CD4-positive, alpha-beta T cell (primary cell): ENCODE measurements at regions of chr22 and their contacts with region 1.

Region 1: GRCh38 chr22:35430897-35431322 is 31.0 kb downstream of the MCM5 start:
- DNase-seq: peak; percentile 47 to 79 (median 64)
- ATAC-seq: peak; percentile 85
- H3K4me3 ChIP-seq: no peak overlapping the region
- H3K4me3 Mint-ChIP-seq: no peak overlapping the region
- H3K27ac ChIP-seq: no peak overlapping the region
- H3K27ac Mint-ChIP-seq: no peak overlapping the region
- H3K4me1 ChIP-seq: no peaks in the 10 kb centered on the region
- H3K4me1 Mint-ChIP-seq: no peaks in the 10 kb centered on the region
- H3K27me3 ChIP-seq: no peaks in the 10 kb centered on the region
- H3K27me3 Mint-ChIP-seq: no peaks in the 10 kb centered on the region
- CTCF ChIP-seq: peak; percentile 71

Region 2: GRCh38 chr22:35582861-35583670 is 152.2 kb after region 1 on chr22:
- CTCF ChIA-PET with region 1: interaction called, 11 read pairs
- POLR2A ChIA-PET with region 1: no interaction called
- intact Hi-C with region 1: loop called (anchors 1 kb)
- DNase-seq: peak; percentile 20 to 80 (median 41)
- ATAC-seq: peak; percentile 64
- H3K4me3 ChIP-seq: no peak overlapping the region
- H3K4me3 Mint-ChIP-seq: no peak overlapping the region
- H3K27ac ChIP-seq: no peak overlapping the region
- H3K27ac Mint-ChIP-seq: no peak overlapping the region
- H3K4me1 ChIP-seq: no peaks in the 10 kb centered on the region
- H3K4me1 Mint-ChIP-seq: no peaks in the 10 kb centered on the region
- H3K27me3 ChIP-seq: no peaks in the 10 kb centered on the region
- H3K27me3 Mint-ChIP-seq: no peaks in the 10 kb centered on the region
- CTCF ChIP-seq: peak; percentile 91

Region 3: GRCh38 chr22:35622191-35622913 is 191.4 kb after region 1 on chr22:
- CTCF ChIA-PET with region 1: no interaction called
- POLR2A ChIA-PET with region 1: no interaction called
- intact Hi-C with region 1: loop called in 1 of 2 experiments (anchors 2 kb)
- DNase-seq: no peak
- ATAC-seq: no peak
- H3K4me3 ChIP-seq: no peak overlapping the region
- H3K4me3 Mint-ChIP-seq: no peak overlapping the region
- H3K27ac ChIP-seq: no peak overlapping the region
- H3K27ac Mint-ChIP-seq: no peak overlapping the region
- H3K4me1 ChIP-seq: peaks cover 9% of the 10 kb centered on the region
- H3K4me1 Mint-ChIP-seq: peaks cover 10% of the 10 kb centered on the region
- H3K27me3 ChIP-seq: no peaks in the 10 kb centered on the region
- H3K27me3 Mint-ChIP-seq: peaks cover 9% of the 10 kb centered on the region
- CTCF ChIP-seq: no peak

Region 4: GRCh38 chr22:35921777-35922176 is 490.9 kb after region 1 on chr22:
- CTCF ChIA-PET with region 1: no interaction called
- POLR2A ChIA-PET with region 1: no interaction called
- intact Hi-C with region 1: loop called (anchors 5 kb)
- DNase-seq: peak in 7 of 14 experiments; percentile 3 to 63 (median 39)
- ATAC-seq: no peak
- H3K4me3 ChIP-seq: no peak overlapping the region
- H3K4me3 Mint-ChIP-seq: no peak overlapping the region
- H3K27ac ChIP-seq: no peak overlapping the region
- H3K27ac Mint-ChIP-seq: no peak overlapping the region
- H3K4me1 ChIP-seq: no peaks in the 10 kb centered on the region
- H3K4me1 Mint-ChIP-seq: no peaks in the 10 kb centered on the region
- H3K27me3 ChIP-seq: no peaks in the 10 kb centered on the region
- H3K27me3 Mint-ChIP-seq: no peaks in the 10 kb centered on the region
- CTCF ChIP-seq: peak; percentile 53

Region 5: GRCh38 chr22:36123673-36124630 is 693.0 kb after region 1 on chr22:
- CTCF ChIA-PET with region 1: interaction called, 9 read pairs
- POLR2A ChIA-PET with region 1: no interaction called
- intact Hi-C with region 1: loop called (anchors 2 kb)
- DNase-seq: peak; percentile 87 to 98 (median 92)
- ATAC-seq: peak; percentile 97
- H3K4me3 ChIP-seq: peak overlapping the region; percentile 47
- H3K4me3 Mint-ChIP-seq: peak overlapping the region; percentile 60
- H3K27ac ChIP-seq: peak overlapping the region in 1 of 2 donors; percentile 32
- H3K27ac Mint-ChIP-seq: peak overlapping the region; percentile 70
- H3K4me1 ChIP-seq: peaks cover 13% of the 10 kb centered on the region
- H3K4me1 Mint-ChIP-seq: peaks cover 8% of the 10 kb centered on the region
- H3K27me3 ChIP-seq: no peaks in the 10 kb centered on the region
- H3K27me3 Mint-ChIP-seq: no peaks in the 10 kb centered on the region
- CTCF ChIP-seq: peak; percentile 97